B cell (primary cell): ENCODE measurements at regions of chr17 and their contacts with region 1.

Region 1: DNA sequence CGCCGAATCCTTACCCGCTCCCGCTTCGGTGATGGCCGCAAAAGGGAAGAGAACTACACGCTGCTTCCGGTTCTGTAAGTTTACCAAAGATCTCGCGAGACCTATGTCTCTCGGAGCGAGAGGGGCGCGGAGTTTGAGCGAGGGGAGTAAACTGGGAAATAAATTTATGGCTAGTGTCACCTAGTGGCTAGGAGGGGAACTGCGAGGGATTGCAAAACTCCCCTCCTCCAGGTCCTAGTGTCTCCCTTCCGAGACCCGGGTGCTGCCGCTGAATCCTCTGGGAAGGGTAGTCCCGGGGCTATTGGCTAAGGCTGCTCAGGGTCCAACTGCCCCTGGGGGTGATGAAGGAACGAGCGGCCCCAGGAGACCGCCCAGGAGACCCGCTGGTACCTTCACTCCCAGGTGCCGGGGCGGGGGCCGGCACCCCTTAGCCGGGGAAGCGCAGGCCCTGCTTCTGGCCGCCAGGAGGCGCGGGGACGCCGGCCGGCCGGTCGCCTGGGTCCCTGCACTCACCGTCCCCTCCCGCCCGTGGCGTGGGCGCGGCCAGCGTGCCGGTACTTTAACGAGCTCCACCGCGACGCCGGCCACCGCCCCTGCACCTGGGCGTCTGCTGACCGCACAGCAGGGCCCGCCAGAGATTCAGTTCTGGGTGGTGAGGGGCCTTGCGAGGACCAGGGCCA is at the start of gene RPL26:
- DNase-seq: peak; percentile 98
- ATAC-seq: peak; percentile 89
- H3K4me3 ChIP-seq: peak within 1 kb of the TSS; percentile 73 to 95 (median 84)
- H3K4me3 Mint-ChIP-seq: peak within 1 kb of the TSS; percentile 89
- H3K27ac ChIP-seq: peak within 1 kb of the TSS; percentile 72 to 82
- H3K27ac Mint-ChIP-seq: peak within 1 kb of the TSS; percentile 87
- H3K4me1 ChIP-seq: peaks cover 25 to 36% of the 10 kb centered on the region in 2 donors
- H3K4me1 Mint-ChIP-seq: peaks cover 50% of the 10 kb centered on the region
- H3K27me3 ChIP-seq: no peaks in the 10 kb centered on the region
- H3K27me3 Mint-ChIP-seq: no peaks in the 10 kb centered on the region
- CTCF ChIP-seq: peak; percentile 100
- total RNA-seq, gene RPL26: 2,601 and 2,684 TPM in 2 replicates

Region 2: GRCh38 chr17:7931709-7932482 is 451.4 kb before region 1 on chr17 and contains the starts of genes CNTROB and TRAPPC1:
- CTCF ChIA-PET with region 1: no interaction called
- POLR2A ChIA-PET with region 1: no interaction called
- intact Hi-C with region 1: loop called (anchors 5 kb)
- DNase-seq: peak; percentile 100
- ATAC-seq: peak; percentile 98
- H3K4me3 ChIP-seq: peak within 1 kb of the TSS; percentile 75 to 98 (median 89)
- H3K4me3 Mint-ChIP-seq: peak within 1 kb of the TSS; percentile 95
- H3K27ac ChIP-seq: peak within 1 kb of the TSS; percentile 77 to 88
- H3K27ac Mint-ChIP-seq: peak within 1 kb of the TSS; percentile 95
- H3K4me1 ChIP-seq: peaks cover 18 to 33% of the 10 kb centered on the region in 2 donors
- H3K4me1 Mint-ChIP-seq: peaks cover 44% of the 10 kb centered on the region
- H3K27me3 ChIP-seq: no peaks in the 10 kb centered on the region
- H3K27me3 Mint-ChIP-seq: no peaks in the 10 kb centered on the region
- CTCF ChIP-seq: no peak
- total RNA-seq, gene CNTROB: 34.8 and 40.4 TPM in 2 replicates
- total RNA-seq, gene TRAPPC1: 86.0 and 118 TPM in 2 replicates

Region 3: GRCh38 chr17:8294814-8295316 is 88.4 kb before region 1 on chr17:
- CTCF ChIA-PET with region 1: no interaction called
- POLR2A ChIA-PET with region 1: interaction called, 5 read pairs
- intact Hi-C with region 1: loop called (anchors 2 kb)
- DNase-seq: no peak
- ATAC-seq: no peak
- H3K4me3 ChIP-seq: peak overlapping the region; percentile 41 to 93 (median 89)
- H3K4me3 Mint-ChIP-seq: peak overlapping the region; percentile 94
- H3K27ac ChIP-seq: peak overlapping the region; percentile 78
- H3K27ac Mint-ChIP-seq: peak overlapping the region; percentile 95
- H3K4me1 ChIP-seq: peaks cover 5 to 21% of the 10 kb centered on the region in 2 donors
- H3K4me1 Mint-ChIP-seq: peaks cover 32% of the 10 kb centered on the region
- H3K27me3 ChIP-seq: no peaks in the 10 kb centered on the region
- H3K27me3 Mint-ChIP-seq: no peaks in the 10 kb centered on the region
- CTCF ChIP-seq: no peak

Region 4: GRCh38 chr17:8443756-8444155 is 60.5 kb after region 1 on chr17:
- CTCF ChIA-PET with region 1: no interaction called
- POLR2A ChIA-PET with region 1: no interaction called
- intact Hi-C with region 1: no loop called
- DNase-seq: no peak
- ATAC-seq: no peak
- H3K4me3 ChIP-seq: no peak overlapping the region
- H3K4me3 Mint-ChIP-seq: no peak overlapping the region
- H3K27ac ChIP-seq: no peak overlapping the region
- H3K27ac Mint-ChIP-seq: no peak overlapping the region
- H3K4me1 ChIP-seq: peaks cover 8 to 11% of the 10 kb centered on the region in 2 donors
- H3K4me1 Mint-ChIP-seq: peaks cover 39% of the 10 kb centered on the region
- H3K27me3 ChIP-seq: no peaks in the 10 kb centered on the region
- H3K27me3 Mint-ChIP-seq: no peaks in the 10 kb centered on the region
- CTCF ChIP-seq: no peak

Region 5: GRCh38 chr17:8740486-8740885 is 357.2 kb after region 1 on chr17:
- CTCF ChIA-PET with region 1: interaction called, 20 read pairs
- POLR2A ChIA-PET with region 1: interaction called, 4 read pairs
- intact Hi-C with region 1: loop called (anchors 1 kb)
- DNase-seq: peak; percentile 70
- ATAC-seq: peak; percentile 78
- H3K4me3 ChIP-seq: peak overlapping the region in 4 of 5 experiments; percentile 32 to 66 (median 49)
- H3K4me3 Mint-ChIP-seq: peak overlapping the region; percentile 82
- H3K27ac ChIP-seq: no peak overlapping the region
- H3K27ac Mint-ChIP-seq: peak overlapping the region; percentile 78
- H3K4me1 ChIP-seq: peaks cover 10 to 26% of the 10 kb centered on the region in 2 donors
- H3K4me1 Mint-ChIP-seq: peaks cover 23% of the 10 kb centered on the region
- H3K27me3 ChIP-seq: peaks cover 0 to 2% (median 0%) of the 10 kb centered on the region in 4 experiments
- H3K27me3 Mint-ChIP-seq: no peaks in the 10 kb centered on the region
- CTCF ChIP-seq: no peak